MCF 10A (cell line): ENCODE measurements at regions of chr6 and their contacts with region 1.

Region 1: GRCh38 chr6:30752157-30752927 is 8.0 kb upstream of the IER3 start:
- DNase-seq: peak; percentile 100
- H3K4me3 Mint-ChIP-seq: peak overlapping the region; percentile 54
- H3K27ac Mint-ChIP-seq: peak overlapping the region; percentile 94
- H3K4me1 Mint-ChIP-seq: peaks cover 49% of the 10 kb centered on the region
- H3K27me3 Mint-ChIP-seq: no peaks in the 10 kb centered on the region
- CTCF ChIP-seq: no peak

Region 2: GRCh38 chr6:30515932-30516753 is 236.2 kb before region 1 on chr6:
- CTCF ChIA-PET with region 1: no interaction called
- POLR2A ChIA-PET with region 1: no interaction called
- intact Hi-C with region 1: no loop called
- DNase-seq: peak; percentile 95
- H3K4me3 Mint-ChIP-seq: peak overlapping the region; percentile 75
- H3K27ac Mint-ChIP-seq: peak overlapping the region; percentile 98
- H3K4me1 Mint-ChIP-seq: peaks cover 5% of the 10 kb centered on the region
- H3K27me3 Mint-ChIP-seq: no peaks in the 10 kb centered on the region
- CTCF ChIP-seq: no peak

Region 3: DNA sequence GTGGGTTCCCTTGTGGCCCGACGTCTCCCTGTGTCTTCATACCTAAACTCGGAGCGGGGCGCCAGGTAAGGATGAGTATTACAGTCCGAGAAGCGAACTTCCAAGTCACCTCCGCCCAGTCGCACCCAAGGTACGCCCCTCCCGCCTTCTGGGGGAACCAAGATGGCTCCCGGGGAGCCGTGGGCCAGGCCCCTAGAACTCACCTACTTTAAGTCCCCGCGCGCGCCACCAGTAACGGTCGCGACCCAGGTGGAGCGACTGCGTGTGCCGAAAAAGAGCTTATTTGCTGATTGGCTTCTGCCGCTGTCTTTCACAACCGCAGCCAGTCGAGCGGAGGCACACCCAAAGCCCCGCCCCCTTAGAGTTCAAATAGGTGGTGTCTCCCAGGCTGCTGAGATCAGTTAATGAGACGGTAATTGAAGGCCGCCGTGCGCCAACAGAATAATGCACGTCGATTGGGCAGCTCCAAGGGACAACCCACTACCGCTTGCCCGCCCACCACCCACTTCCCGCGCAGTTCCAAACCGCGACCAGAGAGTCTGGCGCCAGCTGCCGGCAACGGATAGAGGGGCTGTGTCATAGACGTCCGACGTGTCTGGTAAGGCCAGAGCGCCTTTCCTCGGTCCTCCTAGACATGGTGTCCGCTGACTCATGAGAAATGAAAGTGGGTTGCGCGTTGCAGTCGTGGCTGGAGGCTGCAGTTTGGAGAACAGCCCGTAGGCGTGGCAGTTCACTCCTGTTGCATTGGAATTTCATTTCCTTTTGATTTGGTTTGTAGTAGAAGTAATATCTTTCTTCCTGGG is 35.1 kb before region 1 on chr6 and contains the start of gene MDC1:
- CTCF ChIA-PET with region 1: interaction called, 3 read pairs
- POLR2A ChIA-PET with region 1: interaction called, 13 read pairs
- intact Hi-C with region 1: no loop called
- DNase-seq: peak; percentile 100
- H3K4me3 Mint-ChIP-seq: peak within 1 kb of the TSS; percentile 88
- H3K27ac Mint-ChIP-seq: peak within 1 kb of the TSS; percentile 94
- H3K4me1 Mint-ChIP-seq: peaks cover 38% of the 10 kb centered on the region
- H3K27me3 Mint-ChIP-seq: no peaks in the 10 kb centered on the region
- CTCF ChIP-seq: no peak
- total RNA-seq, gene MDC1: 50.6 and 54.5 TPM in 2 replicates

Region 4: DNA sequence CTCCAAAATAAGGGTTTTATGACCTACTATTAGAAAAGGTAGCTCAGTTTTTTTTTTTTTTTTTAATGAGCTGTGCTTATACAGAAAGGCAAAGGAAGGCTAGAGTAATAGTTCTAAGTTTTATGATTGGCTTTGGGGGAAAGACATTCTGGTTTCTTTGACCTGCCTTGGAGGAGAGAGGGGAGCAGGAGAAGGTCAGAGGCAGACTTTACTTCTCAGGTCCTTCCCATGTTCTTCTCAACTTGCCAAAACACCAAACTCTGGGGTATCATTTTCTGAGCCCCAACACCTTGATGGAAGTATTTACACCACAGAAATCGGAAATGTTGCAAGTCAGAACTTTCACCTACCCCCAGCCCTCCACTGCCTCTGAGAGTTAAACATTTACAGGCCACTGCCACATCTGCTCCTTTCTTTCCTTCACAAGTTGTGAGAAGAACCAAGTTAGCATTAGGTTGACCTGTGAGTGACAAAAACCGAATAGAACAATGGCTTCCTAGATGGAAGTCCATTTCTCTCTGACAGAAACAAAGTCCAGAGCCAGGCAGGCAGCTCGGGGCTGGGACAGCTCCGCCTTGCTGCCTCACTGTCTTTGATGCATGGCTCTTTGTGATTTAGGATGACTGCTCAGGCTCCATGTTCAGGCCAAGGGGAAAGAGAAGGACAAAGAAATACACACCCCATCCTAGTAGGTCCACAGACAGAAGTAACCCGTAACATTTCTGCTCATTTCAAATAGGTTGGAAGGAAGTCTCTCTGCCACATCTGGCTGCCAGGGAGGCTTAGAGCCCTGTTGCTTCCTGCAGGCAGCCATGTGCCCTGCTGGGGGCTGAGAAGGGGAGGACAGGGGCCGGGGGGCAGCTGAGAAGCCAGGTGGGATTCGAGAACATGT is 11.2 kb after region 1 on chr6:
- CTCF ChIA-PET with region 1: interaction called, 11 read pairs
- POLR2A ChIA-PET with region 1: interaction called, 58 read pairs
- intact Hi-C with region 1: no loop called
- DNase-seq: no peak
- H3K4me3 Mint-ChIP-seq: no peak overlapping the region
- H3K27ac Mint-ChIP-seq: no peak overlapping the region
- H3K4me1 Mint-ChIP-seq: peaks cover 24% of the 10 kb centered on the region
- H3K27me3 Mint-ChIP-seq: no peaks in the 10 kb centered on the region
- CTCF ChIP-seq: no peak

Region 5: DNA sequence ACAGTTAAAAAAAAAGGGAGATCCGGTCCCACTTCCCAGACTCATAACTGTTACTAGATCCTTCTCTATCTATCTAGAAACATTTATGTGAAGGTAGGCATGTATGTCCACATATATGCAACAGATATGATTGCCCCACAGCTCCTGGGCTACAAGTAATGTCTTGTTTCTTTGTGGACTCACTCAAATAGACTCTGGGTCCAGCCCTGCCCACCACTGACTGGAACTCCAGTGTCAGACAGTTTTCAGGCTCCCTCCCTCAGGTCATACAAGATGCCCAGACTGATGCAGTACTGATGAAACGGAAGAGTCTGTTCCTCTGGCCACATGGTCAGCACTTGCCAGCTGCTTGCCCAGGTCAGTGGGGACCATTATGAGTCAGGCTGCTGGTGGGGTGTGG is 22.8 kb after region 1 on chr6:
- CTCF ChIA-PET with region 1: interaction called, 11 read pairs
- POLR2A ChIA-PET with region 1: interaction called, 90 read pairs
- intact Hi-C with region 1: no loop called
- DNase-seq: no peak
- H3K4me3 Mint-ChIP-seq: no peak overlapping the region
- H3K27ac Mint-ChIP-seq: peak overlapping the region; percentile 31
- H3K4me1 Mint-ChIP-seq: peaks cover 44% of the 10 kb centered on the region
- H3K27me3 Mint-ChIP-seq: no peaks in the 10 kb centered on the region
- CTCF ChIP-seq: no peak

Region 6: DNA sequence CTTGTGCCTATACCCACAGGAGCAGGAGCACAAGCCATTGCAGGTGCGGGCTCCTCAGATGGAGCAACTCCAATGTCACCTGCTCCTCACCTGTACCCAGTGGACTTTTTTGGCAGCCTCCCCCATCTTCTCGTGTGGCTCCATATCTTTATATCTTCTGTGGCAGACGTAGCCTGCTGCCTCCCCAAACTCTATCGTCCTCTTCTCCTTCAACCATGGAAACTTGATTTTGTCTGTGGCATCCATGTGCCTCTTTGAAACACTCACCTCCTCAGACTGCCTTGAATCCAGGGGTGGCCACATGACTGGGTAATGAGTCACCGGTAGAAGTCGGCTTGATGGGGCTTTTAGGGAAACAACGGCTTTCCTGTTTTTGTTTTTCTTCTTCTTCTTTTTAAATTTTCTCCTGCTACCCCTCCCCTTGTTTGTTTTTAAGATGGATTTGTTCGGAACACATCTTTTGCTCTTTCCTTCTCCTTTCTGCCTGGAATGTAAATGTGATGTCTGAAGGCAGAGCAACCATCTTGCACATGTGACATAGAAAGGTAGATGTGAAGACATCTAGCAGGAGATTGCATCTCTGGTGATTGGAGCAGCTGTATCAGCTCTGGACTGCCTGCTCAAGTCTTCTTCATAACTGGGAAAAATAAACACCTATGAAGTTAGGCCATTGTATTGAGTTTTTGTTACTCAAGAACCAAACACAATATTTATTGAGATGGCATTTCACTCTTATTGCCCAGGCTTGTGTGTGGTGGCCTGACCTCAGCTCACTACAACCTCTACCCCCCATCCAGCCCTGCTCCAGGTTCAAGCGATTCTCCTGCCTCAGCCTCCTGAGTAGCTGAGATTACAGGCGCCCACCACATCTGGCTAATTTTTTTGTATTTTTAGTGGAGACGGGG is 62.0 kb after region 1 on chr6:
- CTCF ChIA-PET with region 1: interaction called, 79 read pairs
- POLR2A ChIA-PET with region 1: interaction called, 159 read pairs
- intact Hi-C with region 1: no loop called
- DNase-seq: peak; percentile 88
- H3K4me3 Mint-ChIP-seq: no peak overlapping the region
- H3K27ac Mint-ChIP-seq: peak overlapping the region; percentile 92
- H3K4me1 Mint-ChIP-seq: peaks cover 39% of the 10 kb centered on the region
- H3K27me3 Mint-ChIP-seq: no peaks in the 10 kb centered on the region
- CTCF ChIP-seq: no peak

Region 7: GRCh38 chr6:31252625-31253024 is 500.3 kb after region 1 on chr6:
- CTCF ChIA-PET with region 1: no interaction called
- POLR2A ChIA-PET with region 1: no interaction called
- intact Hi-C with region 1: no loop called
- DNase-seq: no peak
- H3K4me3 Mint-ChIP-seq: no peak overlapping the region
- H3K27ac Mint-ChIP-seq: no peak overlapping the region
- H3K4me1 Mint-ChIP-seq: no peaks in the 10 kb centered on the region
- H3K27me3 Mint-ChIP-seq: peaks cover 78% of the 10 kb centered on the region
- CTCF ChIP-seq: no peak